Keratinocyte (primary cell): ENCODE measurements at regions of chr4 and their contacts with region 1.

Region 1: DNA sequence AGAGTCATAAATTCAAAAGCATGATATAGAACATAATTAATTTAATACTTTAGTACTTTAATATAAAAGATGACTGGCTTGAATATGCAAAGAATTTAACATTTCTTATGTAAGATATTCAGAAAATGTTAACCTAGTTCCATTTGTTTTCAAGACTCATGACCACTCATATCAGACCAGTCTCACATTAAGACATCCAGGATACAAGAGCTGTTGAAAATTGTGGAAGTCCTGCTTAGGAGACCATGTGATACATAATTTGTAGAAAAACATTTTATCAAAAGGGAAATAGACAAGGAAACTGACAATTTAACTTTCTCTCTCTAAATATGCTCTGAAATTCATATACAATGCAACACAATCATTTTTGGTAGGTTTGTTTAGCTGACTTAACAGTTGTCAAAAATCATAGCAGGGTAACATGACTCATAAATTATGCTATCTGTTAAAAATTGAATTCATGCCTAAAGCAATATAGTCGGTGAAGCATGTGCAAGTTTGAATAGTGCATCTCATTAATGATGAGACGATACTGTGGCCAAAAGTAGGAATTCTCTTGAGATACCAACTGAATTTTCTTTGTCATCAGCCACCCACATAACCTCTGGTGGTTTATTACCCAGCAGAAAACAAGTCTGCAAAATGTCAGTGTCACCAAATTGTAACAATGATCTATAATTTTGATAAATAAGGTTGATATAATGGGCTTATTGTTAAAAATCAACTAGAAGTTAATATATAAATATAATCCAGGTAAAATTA is 211.4 kb downstream of the GASK1B start:
- DNase-seq: no peak
- H3K4me3 ChIP-seq: no peak overlapping the region
- H3K27ac ChIP-seq: no peak overlapping the region
- H3K4me1 ChIP-seq: no peaks in the 10 kb centered on the region
- H3K27me3 ChIP-seq: no peaks in the 10 kb centered on the region
- CTCF ChIP-seq: no peak

Region 2: GRCh38 chr4:157220371-157220881 is 741.0 kb before region 1 on chr4 and contains the start of gene GRIA2:
- dilution Hi-C with region 1: loop called (anchors 25 kb)
- DNase-seq: no peak
- H3K4me3 ChIP-seq: peak within 1 kb of the TSS in 1 of 3 experiments; percentile 34
- H3K27ac ChIP-seq: no peak within 1 kb of the TSS
- H3K4me1 ChIP-seq: peaks cover 5% of the 10 kb centered on the region
- H3K27me3 ChIP-seq: peaks cover 43% of the 10 kb centered on the region
- CTCF ChIP-seq: no peak
- polyA plus RNA-seq, gene GRIA2: not detected in 3 replicates

Region 3: DNA sequence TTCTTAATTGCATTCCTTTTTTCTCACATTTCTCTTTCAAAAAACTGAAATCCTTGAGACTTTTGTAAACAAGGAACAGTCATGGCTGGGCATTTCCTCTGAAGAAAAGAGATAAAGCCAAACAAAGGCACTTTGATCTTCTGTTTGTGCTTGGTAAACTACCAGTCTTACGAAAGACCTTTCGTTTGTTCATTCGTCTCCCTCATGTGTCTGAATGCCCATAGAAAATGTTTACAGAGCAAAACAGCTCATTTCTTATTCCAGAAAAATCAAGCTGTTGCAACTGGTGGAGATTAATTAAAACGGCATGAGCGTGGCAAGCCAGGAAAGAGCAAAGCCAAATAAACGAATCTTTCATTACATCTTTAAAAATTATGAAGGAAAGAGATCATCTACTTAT is 33.5 kb after region 1 on chr4:
- dilution Hi-C with region 1: no loop called
- DNase-seq: no peak
- H3K4me3 ChIP-seq: no peak overlapping the region
- H3K27ac ChIP-seq: no peak overlapping the region
- H3K4me1 ChIP-seq: no peaks in the 10 kb centered on the region
- H3K27me3 ChIP-seq: no peaks in the 10 kb centered on the region
- CTCF ChIP-seq: no peak